Heart left ventricle (tissue), 16 donors: ENCODE measurements at regions of chr17 and their contacts with region 1.

Region 1: GRCh38 chr17:78497115-78497540 is 80.1 kb downstream of the DNAH17 start:
- DNase-seq: peak; percentile 76 to 82 (median 78)
- ATAC-seq: peak; percentile 73 to 91 (median 82)
- H3K4me3 ChIP-seq: no peak overlapping the region
- H3K27ac ChIP-seq: no peak overlapping the region
- H3K4me1 ChIP-seq: peaks cover 0 to 13% (median 3%) of the 10 kb centered on the region in 12 donors
- H3K27me3 ChIP-seq: no peaks in the 10 kb centered on the region
- CTCF ChIP-seq: peak; percentile 59 to 84 (median 77)
- POLR2A ChIP-seq: no peak

Region 2: DNA sequence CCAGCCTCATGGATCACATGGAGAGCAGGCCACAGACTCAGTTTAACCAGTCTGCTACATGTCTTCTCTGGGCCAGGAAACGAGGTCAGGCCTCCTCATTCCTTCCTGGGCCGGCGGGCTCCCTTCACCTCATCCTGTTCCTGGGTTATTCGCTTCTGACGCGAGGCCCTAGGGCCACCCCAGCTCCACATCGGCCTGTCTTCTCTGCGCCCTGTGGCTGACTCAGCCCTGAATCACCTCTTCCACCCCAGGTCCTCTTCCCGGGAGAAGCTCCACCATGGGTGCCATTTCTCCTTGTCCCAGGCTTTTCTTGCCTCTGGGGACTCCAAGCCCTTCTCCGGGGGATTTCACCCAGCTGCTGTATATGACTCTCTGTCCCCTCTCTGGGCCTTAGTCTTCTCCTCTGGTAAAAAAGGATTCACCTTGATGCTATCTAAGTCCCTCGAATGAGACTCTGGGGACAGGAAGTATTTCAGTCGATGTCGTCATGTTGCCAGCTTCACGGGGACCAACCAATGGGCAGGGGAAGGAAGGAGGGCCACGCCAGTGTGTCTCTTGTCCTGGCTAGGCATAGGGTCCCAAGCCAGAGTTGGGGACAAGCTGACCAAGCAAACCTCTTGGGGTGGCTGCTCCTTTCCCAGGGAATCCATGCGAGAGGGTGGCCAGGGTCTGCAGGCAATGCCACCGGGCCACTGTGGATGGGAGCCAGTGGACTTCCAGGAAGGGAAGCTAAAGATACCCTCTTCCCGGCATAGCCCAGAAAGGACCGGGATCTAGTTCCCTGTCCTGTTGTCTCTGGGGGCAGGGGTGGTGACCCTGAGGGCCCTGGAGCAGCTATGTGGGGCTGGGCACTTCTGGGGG is 195.9 kb before region 1 on chr17:
- intact Hi-C with region 1: no loop called
- DNase-seq: no peak
- ATAC-seq: no peak
- H3K4me3 ChIP-seq: no peak overlapping the region
- H3K27ac ChIP-seq: no peak overlapping the region
- H3K4me1 ChIP-seq: peaks cover 0 to 12% (median 9%) of the 10 kb centered on the region in 12 donors
- H3K27me3 ChIP-seq: no peaks in the 10 kb centered on the region
- CTCF ChIP-seq: no peak
- POLR2A ChIP-seq: no peak

Region 3: GRCh38 chr17:78559749-78560368 is 62.7 kb after region 1 on chr17:
- intact Hi-C with region 1: no loop called
- DNase-seq: peak in 1 of 5 donors; percentile 54
- ATAC-seq: no peak
- H3K4me3 ChIP-seq: no peak overlapping the region
- H3K27ac ChIP-seq: no peak overlapping the region
- H3K4me1 ChIP-seq: peaks cover 0 to 14% (median 5%) of the 10 kb centered on the region in 12 donors
- H3K27me3 ChIP-seq: peaks cover 0 to 3% (median 0%) of the 10 kb centered on the region in 9 donors
- CTCF ChIP-seq: no peak
- POLR2A ChIP-seq: no peak

Region 4: DNA sequence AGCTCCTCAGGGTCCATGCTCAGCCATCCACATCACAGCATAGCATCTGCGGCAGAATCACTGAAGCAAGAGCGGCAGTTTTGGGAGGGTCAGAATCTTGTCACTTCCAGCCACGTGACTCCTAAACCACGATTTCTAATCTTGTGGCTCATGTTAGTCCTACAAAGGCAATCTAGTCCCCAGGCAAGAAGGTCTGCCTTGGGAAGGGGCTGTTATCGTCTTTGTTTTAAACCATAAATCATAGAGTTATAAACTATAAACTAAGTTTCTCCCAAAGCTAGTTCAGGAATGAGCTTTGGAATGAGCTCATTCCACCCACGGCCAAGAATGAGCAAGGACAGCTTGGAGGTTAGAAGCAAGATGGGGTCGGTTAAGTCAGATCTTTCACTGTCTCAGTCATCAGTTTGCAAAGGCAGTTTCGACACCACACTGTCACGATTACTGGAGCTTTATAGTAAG is 100.9 kb after region 1 on chr17:
- intact Hi-C with region 1: loop called in 5 of 10 experiments (anchors 5 to 10 kb)
- DNase-seq: peak in 1 of 5 donors; percentile 26
- ATAC-seq: peak in 1 of 4 donors; percentile 45
- H3K4me3 ChIP-seq: no peak overlapping the region
- H3K27ac ChIP-seq: peak overlapping the region in 1 of 12 donors; percentile 2
- H3K4me1 ChIP-seq: peaks cover 0 to 20% (median 7%) of the 10 kb centered on the region in 12 donors
- H3K27me3 ChIP-seq: no peaks in the 10 kb centered on the region
- CTCF ChIP-seq: no peak
- POLR2A ChIP-seq: no peak

Region 5: DNA sequence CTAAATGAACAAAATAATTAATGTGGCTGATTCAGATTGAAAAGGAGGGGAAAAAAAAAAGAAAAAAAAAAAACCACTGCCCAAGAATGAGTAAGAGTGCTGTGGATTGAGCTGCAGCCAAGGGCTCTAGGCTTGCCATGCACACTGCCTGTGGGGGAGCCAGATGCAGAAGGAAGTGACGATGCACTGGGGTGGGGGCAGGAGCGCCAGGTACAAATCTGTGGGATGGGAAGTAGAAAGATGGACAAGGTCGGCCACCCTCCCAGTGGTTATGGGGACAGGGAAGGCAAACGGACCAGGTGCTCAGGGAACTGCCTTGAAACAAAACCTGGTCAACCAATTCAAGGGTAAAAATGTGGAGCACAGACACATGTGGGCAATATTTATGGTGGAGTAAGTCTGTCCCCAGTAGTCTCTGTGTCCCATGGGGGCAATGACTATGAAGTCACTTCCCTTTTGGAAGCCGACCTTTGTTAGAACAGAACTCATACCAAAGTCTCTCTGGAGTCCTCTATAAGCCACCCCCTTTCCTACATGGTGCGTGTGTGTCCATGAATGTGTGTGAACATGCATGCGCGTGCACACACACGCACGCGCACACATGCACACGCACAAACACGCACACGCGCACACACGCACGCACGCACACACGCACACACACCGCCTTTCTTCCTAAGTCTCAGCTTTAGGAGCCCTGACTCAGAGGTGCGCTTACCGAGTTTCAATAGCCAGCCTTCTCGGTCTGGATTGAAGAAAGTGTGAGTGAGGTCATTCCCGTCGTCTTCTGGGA is 200.6 kb after region 1 on chr17:
- intact Hi-C with region 1: loop called in 2 of 10 experiments (anchors 2 to 5 kb)
- DNase-seq: no peak
- ATAC-seq: peak in 2 of 4 donors; percentile 27 to 75
- H3K4me3 ChIP-seq: no peak overlapping the region
- H3K27ac ChIP-seq: no peak overlapping the region
- H3K4me1 ChIP-seq: peaks cover 0 to 15% (median 0%) of the 10 kb centered on the region in 12 donors
- H3K27me3 ChIP-seq: no peaks in the 10 kb centered on the region
- CTCF ChIP-seq: no peak
- POLR2A ChIP-seq: no peak

Region 6: DNA sequence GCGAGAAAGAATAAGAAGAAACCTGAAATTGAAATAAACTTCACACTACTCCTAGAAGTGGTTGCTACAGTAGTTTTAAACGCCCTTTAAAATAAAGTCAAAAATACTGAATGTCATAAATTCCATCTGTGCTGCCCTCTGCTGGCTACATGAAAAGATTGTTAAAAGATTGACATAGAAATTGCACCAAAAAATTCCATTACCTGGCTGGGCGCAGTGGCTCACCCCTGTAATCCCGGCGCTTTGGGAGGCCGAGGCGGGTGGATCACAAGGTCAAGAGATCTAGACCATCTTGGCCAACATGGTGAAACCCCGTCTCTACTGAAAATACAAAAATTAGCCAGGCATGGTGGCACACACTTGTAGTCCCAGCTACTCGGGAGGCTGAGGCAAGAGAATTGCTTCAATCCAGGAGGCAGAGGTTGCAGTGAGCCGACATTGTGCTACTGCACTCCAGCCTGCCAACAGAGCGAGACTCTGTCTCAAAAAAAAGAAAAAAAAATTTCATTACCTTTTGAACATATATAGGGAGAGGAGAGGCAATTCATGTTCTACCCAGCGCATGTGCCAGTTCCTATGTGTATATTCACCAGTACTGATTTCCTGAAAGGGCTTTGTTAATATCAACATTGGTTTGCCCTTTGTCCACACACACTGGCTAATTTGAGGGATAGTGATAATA is 248.4 kb after region 1 on chr17:
- intact Hi-C with region 1: loop called in 5 of 10 experiments (anchors 1 to 10 kb)
- DNase-seq: no peak
- ATAC-seq: no peak
- H3K4me3 ChIP-seq: no peak overlapping the region
- H3K27ac ChIP-seq: peak overlapping the region in 2 of 12 donors; percentile 0 to 81
- H3K4me1 ChIP-seq: peaks cover 0 to 97% (median 51%) of the 10 kb centered on the region in 12 donors
- H3K27me3 ChIP-seq: no peaks in the 10 kb centered on the region
- CTCF ChIP-seq: peak; percentile 51 to 68 (median 62)
- POLR2A ChIP-seq: no peak

Region 7: GRCh38 chr17:78970834-78971773 is 474.0 kb after region 1 on chr17:
- intact Hi-C with region 1: loop called in 2 of 10 experiments (anchors 5 to 10 kb)
- DNase-seq: peak; percentile 79 to 88 (median 84)
- ATAC-seq: peak in 3 of 4 donors; percentile 39 to 49 (median 43)
- H3K4me3 ChIP-seq: no peak overlapping the region
- H3K27ac ChIP-seq: peak overlapping the region in 9 of 12 donors; percentile 11 to 72 (median 51)
- H3K4me1 ChIP-seq: peaks cover 0 to 54% (median 26%) of the 10 kb centered on the region in 12 donors
- H3K27me3 ChIP-seq: no peaks in the 10 kb centered on the region
- CTCF ChIP-seq: peak; percentile 82 to 94 (median 88)
- POLR2A ChIP-seq: no peak